Aorta (tissue), 5 donors: ENCODE measurements at regions of chr17 and their contacts with region 1.

Region 1: DNA sequence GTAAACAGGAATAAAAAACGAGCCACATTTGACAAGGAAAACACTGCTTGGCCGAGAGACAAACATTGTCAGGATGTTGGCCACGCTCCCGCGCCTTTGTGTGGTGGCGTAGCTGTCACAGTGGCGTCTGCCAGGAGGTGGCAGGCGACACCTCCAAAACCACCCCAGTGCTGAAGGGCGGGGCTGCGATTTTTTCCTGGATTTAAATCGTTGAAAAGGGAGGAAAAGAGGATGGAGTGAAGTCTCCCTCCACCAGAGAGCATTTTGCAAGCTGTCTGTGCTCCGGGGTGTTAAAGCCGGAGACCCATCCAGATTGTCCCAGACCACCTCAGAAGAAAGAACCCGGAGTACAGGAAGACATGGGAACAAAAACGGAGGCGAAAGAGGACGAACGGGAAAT is 12.7 kb downstream of the MRM3 start:
- DNase-seq: peak; percentile 88 to 94
- ATAC-seq: peak; percentile 90
- H3K4me3 ChIP-seq: peak overlapping the region; percentile 5 to 8
- H3K27ac ChIP-seq: no peak overlapping the region
- H3K4me1 ChIP-seq: no peaks in the 10 kb centered on the region
- H3K27me3 ChIP-seq: no peaks in the 10 kb centered on the region

Region 2: DNA sequence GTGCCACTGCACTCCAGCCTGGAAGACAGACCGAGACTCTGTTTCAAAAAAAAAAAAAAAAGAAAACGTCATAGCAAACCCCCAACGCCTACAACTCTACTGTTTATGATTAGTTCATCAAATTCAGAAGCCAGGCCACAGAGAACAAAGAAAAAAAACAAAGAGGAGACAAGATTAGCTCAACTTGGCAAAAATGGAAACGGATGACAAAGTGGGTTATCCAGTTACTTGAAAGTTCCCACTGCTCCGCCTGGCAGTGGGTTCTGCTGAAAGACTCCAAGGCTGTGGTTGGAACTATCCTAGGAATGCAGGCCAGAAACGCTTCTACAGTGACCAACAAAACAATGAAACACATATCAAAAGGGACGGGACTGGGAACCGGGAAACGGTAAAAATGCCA is 40.4 kb after region 1 on chr17:
- intact Hi-C with region 1: no loop called
- DNase-seq: peak in 1 of 2 donors; percentile 70
- ATAC-seq: peak; percentile 60
- H3K4me3 ChIP-seq: no peak overlapping the region
- H3K27ac ChIP-seq: no peak overlapping the region
- H3K4me1 ChIP-seq: no peaks in the 10 kb centered on the region
- H3K27me3 ChIP-seq: no peaks in the 10 kb centered on the region

Region 3: DNA sequence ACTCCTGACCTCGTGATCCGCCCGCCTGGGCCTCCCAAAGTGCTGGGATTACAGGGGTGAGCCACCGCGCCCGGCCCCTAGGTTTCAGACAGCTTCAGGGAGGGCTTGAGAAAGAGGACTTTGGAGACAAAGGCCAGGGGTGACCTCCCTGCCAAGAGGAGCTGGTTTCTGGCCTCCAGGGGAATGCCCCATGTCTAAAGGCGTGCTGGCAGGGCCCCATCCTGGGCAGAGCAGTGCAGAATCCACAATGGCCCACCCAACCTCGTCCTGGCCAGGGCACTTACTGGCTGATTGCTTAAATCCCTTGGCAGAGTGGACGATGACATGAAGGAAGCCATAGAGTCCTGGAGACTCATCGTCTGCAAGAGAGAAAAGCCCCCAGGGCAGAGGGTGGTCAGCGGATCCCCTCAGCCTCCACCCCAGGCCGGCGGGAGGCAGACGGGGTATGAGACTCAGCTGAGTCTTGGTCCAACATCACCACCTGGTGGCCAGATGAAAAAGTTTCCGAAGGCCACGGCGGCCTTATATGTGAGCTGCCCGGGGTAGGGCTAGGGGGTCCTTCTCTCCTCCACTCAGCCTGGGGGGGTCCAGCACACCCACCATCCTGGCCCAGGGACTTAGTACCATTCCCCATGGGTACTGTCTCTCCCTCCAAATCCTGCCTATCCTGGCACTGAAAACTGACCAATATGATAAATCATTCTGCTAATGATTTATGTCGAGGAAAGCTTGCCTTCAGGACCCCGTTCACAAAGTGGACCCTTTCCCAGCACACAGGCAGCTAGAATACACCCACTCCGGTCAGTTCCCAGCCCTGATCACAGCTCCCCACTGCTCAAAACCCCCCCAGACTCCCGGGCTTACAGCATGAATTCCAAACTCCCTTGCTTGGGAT is 261.1 kb after region 1 on chr17:
- intact Hi-C with region 1: loop called (anchors 5 kb)
- DNase-seq: peak; percentile 76 to 84
- ATAC-seq: peak; percentile 86
- H3K4me3 ChIP-seq: no peak overlapping the region
- H3K27ac ChIP-seq: no peak overlapping the region
- H3K4me1 ChIP-seq: no peaks in the 10 kb centered on the region
- H3K27me3 ChIP-seq: no peaks in the 10 kb centered on the region